Activated CD4-positive, alpha-beta T cell treated with anti-CD3 and anti-CD28 coated beads, Interleukin-2, amount 10 ng/mL, durations not matched to agents 24 days and 14 days (primary cell): ENCODE measurements at regions of chr13 and their contacts with region 1.

Region 1: DNA sequence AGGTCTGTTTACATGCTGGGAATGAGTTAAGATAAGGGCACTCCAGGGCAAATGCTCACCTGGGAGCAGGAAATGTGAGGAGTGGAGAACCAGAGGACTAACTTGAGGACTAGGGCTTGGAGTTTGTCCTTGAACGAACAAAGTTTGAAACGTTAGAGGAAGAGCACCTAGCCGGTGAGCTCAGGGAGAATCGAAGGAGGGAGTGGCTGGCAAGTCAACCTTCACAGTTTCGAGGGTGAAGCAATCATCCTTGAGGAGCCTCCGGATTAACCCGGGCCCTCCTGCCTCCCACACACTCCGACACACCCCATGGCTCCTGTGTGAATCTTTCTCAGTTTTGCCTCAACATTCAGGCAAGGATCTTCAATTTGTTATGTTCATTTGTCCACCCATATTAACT is 58.6 kb downstream of the LMO7 start:
- DNase-seq: no peak
- H3K4me3 Mint-ChIP-seq: no peak overlapping the region
- H3K27ac Mint-ChIP-seq: no peak overlapping the region
- H3K4me1 Mint-ChIP-seq: no peaks in the 10 kb centered on the region
- H3K27me3 Mint-ChIP-seq: no peaks in the 10 kb centered on the region

Region 2: GRCh38 chr13:74625541-74625940 is 1069.2 kb before region 1 on chr13:
- intact Hi-C with region 1: no loop called
- DNase-seq: no peak
- H3K4me3 Mint-ChIP-seq: no peak overlapping the region
- H3K27ac Mint-ChIP-seq: no peak overlapping the region
- H3K4me1 Mint-ChIP-seq: no peaks in the 10 kb centered on the region
- H3K27me3 Mint-ChIP-seq: no peaks in the 10 kb centered on the region

Region 3: GRCh38 chr13:75656425-75656989 is 38.2 kb before region 1 on chr13:
- intact Hi-C with region 1: no loop called
- DNase-seq: no peak
- H3K4me3 Mint-ChIP-seq: no peak overlapping the region
- H3K27ac Mint-ChIP-seq: no peak overlapping the region
- H3K4me1 Mint-ChIP-seq: no peaks in the 10 kb centered on the region
- H3K27me3 Mint-ChIP-seq: peaks cover 2% of the 10 kb centered on the region

Region 4: DNA sequence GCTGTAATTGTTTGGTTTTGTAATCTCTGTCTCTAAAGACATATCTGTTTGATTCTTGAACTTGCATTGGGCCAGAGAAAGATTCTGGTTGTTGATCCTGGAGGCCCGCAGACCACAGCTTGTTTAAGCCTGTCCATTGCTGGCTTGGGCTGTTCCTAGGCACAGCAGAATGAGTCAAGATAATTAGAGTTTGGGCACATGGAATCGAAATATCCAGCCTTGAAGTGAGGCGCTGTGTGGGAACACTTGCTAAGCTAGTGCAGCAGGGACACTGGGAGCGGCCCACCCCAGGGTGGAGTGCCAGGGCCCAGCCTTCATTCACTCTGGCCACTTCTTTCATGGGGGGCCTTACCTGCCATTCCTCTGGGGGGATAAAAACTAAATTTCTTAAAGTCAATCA is 161.1 kb after region 1 on chr13:
- intact Hi-C with region 1: loop called (anchors 5 kb)
- DNase-seq: no peak
- H3K4me3 Mint-ChIP-seq: no peak overlapping the region
- H3K27ac Mint-ChIP-seq: no peak overlapping the region
- H3K4me1 Mint-ChIP-seq: no peaks in the 10 kb centered on the region
- H3K27me3 Mint-ChIP-seq: no peaks in the 10 kb centered on the region

Region 5: GRCh38 chr13:75870397-75870903 is 175.7 kb after region 1 on chr13:
- intact Hi-C with region 1: loop called (anchors 5 kb)
- DNase-seq: peak; percentile 66
- H3K4me3 Mint-ChIP-seq: peak overlapping the region; percentile 57
- H3K27ac Mint-ChIP-seq: no peak overlapping the region
- H3K4me1 Mint-ChIP-seq: peaks cover 10% of the 10 kb centered on the region
- H3K27me3 Mint-ChIP-seq: peaks cover 8% of the 10 kb centered on the region

Region 6: GRCh38 chr13:76016799-76017400 is 322.2 kb after region 1 on chr13:
- intact Hi-C with region 1: loop called (anchors 5 kb)
- DNase-seq: peak; percentile 72
- H3K4me3 Mint-ChIP-seq: no peak overlapping the region
- H3K27ac Mint-ChIP-seq: no peak overlapping the region
- H3K4me1 Mint-ChIP-seq: no peaks in the 10 kb centered on the region
- H3K27me3 Mint-ChIP-seq: no peaks in the 10 kb centered on the region

Region 7: GRCh38 chr13:76473552-76474134 is 778.9 kb after region 1 on chr13:
- intact Hi-C with region 1: loop called (anchors 2 kb)
- DNase-seq: peak; percentile 89
- H3K4me3 Mint-ChIP-seq: no peak overlapping the region
- H3K27ac Mint-ChIP-seq: no peak overlapping the region
- H3K4me1 Mint-ChIP-seq: no peaks in the 10 kb centered on the region
- H3K27me3 Mint-ChIP-seq: peaks cover 1% of the 10 kb centered on the region

Region 8: GRCh38 chr13:76903544-76904162 is 1208.9 kb after region 1 on chr13:
- intact Hi-C with region 1: loop called (anchors 2 kb)
- DNase-seq: peak; percentile 90
- H3K4me3 Mint-ChIP-seq: no peak overlapping the region
- H3K27ac Mint-ChIP-seq: no peak overlapping the region
- H3K4me1 Mint-ChIP-seq: no peaks in the 10 kb centered on the region
- H3K27me3 Mint-ChIP-seq: peaks cover 30% of the 10 kb centered on the region